CD8-positive, alpha-beta T cell (primary cell): ENCODE measurements at regions of chr3 and their contacts with region 1.

Region 1: GRCh38 chr3:108090701-108091451 is at the start of gene CD47:
- DNase-seq: peak; percentile 93 to 99 (median 97)
- ATAC-seq: peak; percentile 70
- H3K4me3 ChIP-seq: peak within 1 kb of the TSS; percentile 91 to 93
- H3K4me3 Mint-ChIP-seq: peak within 1 kb of the TSS; percentile 98
- H3K27ac ChIP-seq: peak within 1 kb of the TSS; percentile 93 to 94
- H3K27ac Mint-ChIP-seq: peak within 1 kb of the TSS; percentile 99
- H3K4me1 ChIP-seq: peaks cover 51% of the 10 kb centered on the region
- H3K4me1 Mint-ChIP-seq: peaks cover 39% of the 10 kb centered on the region
- H3K27me3 ChIP-seq: no peaks in the 10 kb centered on the region
- H3K27me3 Mint-ChIP-seq: no peaks in the 10 kb centered on the region
- CTCF ChIP-seq: no peak
- total RNA-seq, gene CD47: 118 to 125 TPM

Region 2: DNA sequence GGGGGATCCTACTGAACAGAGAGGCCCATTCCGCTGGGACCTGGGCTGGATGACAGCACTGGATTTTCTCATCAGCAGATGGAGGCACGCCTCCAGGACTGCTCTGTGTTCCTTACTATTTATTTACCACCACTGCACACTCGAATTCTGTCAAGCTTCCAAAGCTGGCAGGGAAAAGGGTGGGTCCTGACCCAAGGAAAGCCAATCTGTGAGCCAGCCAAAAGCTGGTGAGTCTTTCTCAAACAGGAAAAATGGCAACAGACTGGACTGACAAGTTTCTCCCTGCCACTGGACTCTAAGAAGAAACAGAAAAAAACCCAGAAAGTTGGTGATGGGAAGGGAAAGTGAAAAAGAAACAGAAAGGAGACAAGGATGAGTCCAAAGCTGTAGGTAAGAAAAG is 37.8 kb before region 1 on chr3:
- CTCF ChIA-PET with region 1: interaction called, 3 read pairs
- POLR2A ChIA-PET with region 1: no interaction called
- intact Hi-C with region 1: loop called in 1 of 2 experiments (anchors 5 kb)
- DNase-seq: no peak
- ATAC-seq: no peak
- H3K4me3 ChIP-seq: no peak overlapping the region
- H3K4me3 Mint-ChIP-seq: no peak overlapping the region
- H3K27ac ChIP-seq: peak overlapping the region in 1 of 2 experiments; percentile 15
- H3K27ac Mint-ChIP-seq: peak overlapping the region; percentile 87
- H3K4me1 ChIP-seq: peaks cover 10% of the 10 kb centered on the region
- H3K4me1 Mint-ChIP-seq: peaks cover 54% of the 10 kb centered on the region
- H3K27me3 ChIP-seq: no peaks in the 10 kb centered on the region
- H3K27me3 Mint-ChIP-seq: no peaks in the 10 kb centered on the region
- CTCF ChIP-seq: no peak

Region 3: GRCh38 chr3:108079877-108080659 is 10.8 kb before region 1 on chr3:
- CTCF ChIA-PET with region 1: interaction called, 4 read pairs
- POLR2A ChIA-PET with region 1: interaction called, 9 read pairs
- intact Hi-C with region 1: loop called in 1 of 2 experiments (anchors 1 kb)
- DNase-seq: peak in 1 of 9 experiments; percentile 39
- ATAC-seq: peak; percentile 59
- H3K4me3 ChIP-seq: no peak overlapping the region
- H3K4me3 Mint-ChIP-seq: peak overlapping the region; percentile 40
- H3K27ac ChIP-seq: peak overlapping the region in 1 of 2 experiments; percentile 41
- H3K27ac Mint-ChIP-seq: peak overlapping the region; percentile 81
- H3K4me1 ChIP-seq: peaks cover 86% of the 10 kb centered on the region
- H3K4me1 Mint-ChIP-seq: peaks cover 23% of the 10 kb centered on the region
- H3K27me3 ChIP-seq: no peaks in the 10 kb centered on the region
- H3K27me3 Mint-ChIP-seq: no peaks in the 10 kb centered on the region
- CTCF ChIP-seq: no peak

Region 4: DNA sequence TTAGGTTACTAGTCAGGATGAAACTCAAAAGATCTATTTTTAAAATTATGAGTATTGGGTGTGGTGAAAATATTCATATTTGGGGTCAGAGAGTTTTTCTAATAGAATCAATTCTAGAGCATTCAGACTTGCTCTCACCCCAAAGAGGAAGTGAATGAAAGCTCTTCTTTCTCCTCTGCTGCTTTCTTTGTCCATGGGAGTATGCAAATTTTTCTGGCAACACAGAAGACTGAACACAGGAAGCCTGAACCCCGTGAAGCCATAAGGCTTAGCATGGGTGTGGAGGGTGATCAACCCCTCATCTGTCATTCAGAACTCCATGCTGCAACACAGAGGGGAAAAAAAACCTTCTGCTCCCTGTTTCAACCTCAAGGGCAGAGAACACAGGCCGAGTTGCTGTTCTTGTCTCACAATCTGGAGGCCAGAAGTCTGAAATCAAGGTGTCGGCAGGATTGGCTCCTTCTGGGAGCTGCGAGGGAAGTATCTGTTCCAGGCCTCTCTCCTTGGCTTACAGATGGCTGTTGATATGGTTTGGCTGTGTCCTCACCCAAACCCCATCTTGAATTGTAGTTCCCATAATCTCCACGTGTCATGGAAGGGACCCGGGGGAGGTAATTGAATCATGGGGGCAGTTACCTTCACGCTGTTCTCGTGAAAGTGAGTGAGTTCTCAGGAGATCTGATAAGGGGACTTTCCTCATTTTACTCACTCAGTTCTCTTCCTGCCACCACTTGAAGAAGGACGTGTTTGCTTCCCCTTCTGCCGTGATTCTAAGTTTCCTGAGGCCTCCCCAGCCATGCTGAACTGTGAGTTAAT is 33.7 kb after region 1 on chr3:
- CTCF ChIA-PET with region 1: interaction called, 8 read pairs
- POLR2A ChIA-PET with region 1: interaction called, 103 read pairs
- intact Hi-C with region 1: loop called (anchors 1 kb)
- DNase-seq: peak; percentile 15 to 91 (median 57)
- ATAC-seq: peak; percentile 59
- H3K4me3 ChIP-seq: peak overlapping the region; percentile 41 to 55
- H3K4me3 Mint-ChIP-seq: peak overlapping the region; percentile 84
- H3K27ac ChIP-seq: peak overlapping the region; percentile 78 to 85
- H3K27ac Mint-ChIP-seq: peak overlapping the region; percentile 99
- H3K4me1 ChIP-seq: peaks cover 64% of the 10 kb centered on the region
- H3K4me1 Mint-ChIP-seq: peaks cover 65% of the 10 kb centered on the region
- H3K27me3 ChIP-seq: no peaks in the 10 kb centered on the region
- H3K27me3 Mint-ChIP-seq: no peaks in the 10 kb centered on the region
- CTCF ChIP-seq: no peak

Region 5: GRCh38 chr3:108835101-108835500 is 744.2 kb after region 1 on chr3:
- CTCF ChIA-PET with region 1: no interaction called
- POLR2A ChIA-PET with region 1: no interaction called
- intact Hi-C with region 1: loop called in 1 of 2 experiments (anchors 10 kb)
- DNase-seq: peak in 4 of 9 experiments; percentile 36 to 78 (median 60)
- ATAC-seq: peak; percentile 90
- H3K4me3 ChIP-seq: no peak overlapping the region
- H3K4me3 Mint-ChIP-seq: peak overlapping the region; percentile 66
- H3K27ac ChIP-seq: peak overlapping the region; percentile 13 to 43
- H3K27ac Mint-ChIP-seq: peak overlapping the region; percentile 90
- H3K4me1 ChIP-seq: peaks cover 60% of the 10 kb centered on the region
- H3K4me1 Mint-ChIP-seq: peaks cover 84% of the 10 kb centered on the region
- H3K27me3 ChIP-seq: no peaks in the 10 kb centered on the region
- H3K27me3 Mint-ChIP-seq: no peaks in the 10 kb centered on the region
- CTCF ChIP-seq: no peak

Region 6: GRCh38 chr3:109316162-109316730 is 1225.4 kb after region 1 on chr3 and contains the start of gene DPPA2:
- CTCF ChIA-PET with region 1: no interaction called
- POLR2A ChIA-PET with region 1: no interaction called
- intact Hi-C with region 1: no loop called
- DNase-seq: no peak
- ATAC-seq: no peak
- H3K4me3 ChIP-seq: no peak within 1 kb of the TSS
- H3K4me3 Mint-ChIP-seq: no peak within 1 kb of the TSS
- H3K27ac ChIP-seq: no peak within 1 kb of the TSS
- H3K27ac Mint-ChIP-seq: no peak within 1 kb of the TSS
- H3K4me1 ChIP-seq: no peaks in the 10 kb centered on the region
- H3K4me1 Mint-ChIP-seq: no peaks in the 10 kb centered on the region
- H3K27me3 ChIP-seq: no peaks in the 10 kb centered on the region
- H3K27me3 Mint-ChIP-seq: no peaks in the 10 kb centered on the region
- CTCF ChIP-seq: no peak
- total RNA-seq, gene DPPA2: not detected